Cardiac septum (tissue), 1 donor: ENCODE measurements at regions of chr2 and their contacts with region 1.

Region 1: DNA sequence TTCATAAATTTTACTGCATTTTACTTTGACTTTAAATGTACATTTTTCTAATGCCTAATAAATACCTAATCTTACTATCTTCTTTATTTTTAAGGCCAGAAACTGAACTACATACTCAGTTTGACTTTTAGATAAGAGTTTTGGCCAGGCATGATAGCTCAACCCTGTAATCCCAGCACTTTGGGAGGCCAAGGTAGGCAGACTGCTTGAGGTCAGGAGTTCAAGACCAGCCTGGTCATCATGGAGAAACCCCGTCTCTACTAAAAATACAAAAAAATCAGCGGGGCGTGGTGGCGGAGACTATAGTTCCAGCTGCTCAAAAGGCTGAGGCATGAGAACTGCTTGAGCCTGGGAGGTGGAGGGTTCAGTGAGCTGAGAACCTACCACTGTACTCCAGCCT is 9.1 kb downstream of the ATF2 start:
- DNase-seq: no peak

Region 2: GRCh38 chr2:175140332-175140731 is 18.6 kb before region 1 on chr2:
- intact Hi-C with region 1: loop called (anchors 1 kb)
- DNase-seq: no peak